ENCODE measurements at regions of chr1 and their contacts with region 1.

Region 1: DNA sequence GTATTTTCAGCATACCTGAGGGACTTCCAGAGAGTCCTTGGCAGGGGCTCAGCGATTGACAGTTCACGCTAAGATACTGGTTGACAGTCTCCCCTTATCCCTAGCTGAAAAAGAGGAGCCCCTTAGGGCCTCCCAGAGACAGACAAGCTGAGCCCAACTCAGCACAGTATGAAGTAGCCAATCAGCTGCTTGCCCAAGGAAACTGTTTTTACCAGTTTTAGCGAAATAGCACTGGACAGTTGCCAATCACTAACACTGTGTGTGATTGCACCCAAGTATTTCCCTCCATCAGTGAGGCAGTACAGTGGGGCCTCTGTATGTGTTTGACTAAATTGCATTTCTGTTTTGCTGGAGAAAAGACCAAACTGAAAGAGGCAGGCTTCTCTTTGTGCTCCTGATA is 27.0 kb downstream of the KHDRBS1 start:
- DNase-seq: no peak
- ATAC-seq: no peak
- H3K4me3 ChIP-seq: no peak overlapping the region
- H3K4me3 Mint-ChIP-seq: no peak overlapping the region
- H3K27ac ChIP-seq: no peak overlapping the region
- H3K27ac Mint-ChIP-seq: peak overlapping the region in 1 of 9 donors; percentile 82
- H3K4me1 ChIP-seq: no peaks in the 10 kb centered on the region
- H3K4me1 Mint-ChIP-seq: peaks cover 0 to 11% (median 7%) of the 10 kb centered on the region in 7 donors
- H3K27me3 ChIP-seq: no peaks in the 10 kb centered on the region
- H3K27me3 Mint-ChIP-seq: no peaks in the 10 kb centered on the region

Region 2: DNA sequence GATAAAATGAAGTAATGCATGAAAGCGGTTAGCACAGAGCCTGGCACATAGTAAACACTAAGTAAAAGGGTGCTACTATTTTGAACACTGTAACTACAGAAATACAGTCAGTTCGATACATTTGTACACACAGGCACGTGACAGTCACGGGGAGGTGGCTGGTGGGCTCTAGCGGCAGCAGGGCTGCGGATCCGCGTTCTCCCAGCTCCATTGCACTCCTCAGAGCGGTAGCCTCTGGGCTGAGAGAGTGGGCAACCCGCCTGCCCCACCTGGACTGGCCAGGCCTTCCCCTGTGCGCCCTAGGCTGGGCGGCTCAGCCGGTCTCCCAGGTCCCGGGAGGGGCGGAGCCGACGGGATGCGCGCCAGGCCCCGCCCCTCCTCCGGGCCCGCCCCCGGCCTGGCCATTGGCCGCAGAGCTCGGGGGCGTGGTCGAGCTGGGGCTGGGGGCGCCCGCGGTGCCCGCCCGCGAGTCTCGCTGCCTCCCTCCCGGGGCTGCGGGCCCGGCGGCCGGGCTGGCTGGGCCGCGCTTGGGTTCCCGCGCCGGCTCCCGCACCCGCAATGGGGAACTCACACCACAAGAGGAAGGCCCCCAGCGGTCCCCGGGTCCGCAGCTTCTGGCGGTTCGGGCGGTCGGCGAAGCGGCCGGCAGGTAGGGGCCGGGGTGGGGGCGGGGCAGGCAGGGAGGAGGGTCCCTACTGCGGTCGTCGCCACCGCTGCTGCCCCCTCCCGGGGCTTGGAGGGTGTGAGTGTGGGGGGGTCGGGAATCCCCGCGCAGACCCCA is 713.0 kb after region 1 on chr1:
- CTCF ChIA-PET with region 1: no interaction called
- POLR2A ChIA-PET with region 1: no interaction called
- intact Hi-C with region 1: loop called in 1 of 2 experiments (anchors 10 kb)
- DNase-seq: peak; percentile 51 to 81 (median 66)
- ATAC-seq: peak; percentile 90
- H3K4me3 ChIP-seq: peak overlapping the region; percentile 65
- H3K4me3 Mint-ChIP-seq: peak overlapping the region; percentile 75 to 91 (median 82)
- H3K27ac ChIP-seq: peak overlapping the region; percentile 39
- H3K27ac Mint-ChIP-seq: peak overlapping the region in 7 of 9 donors; percentile 70 to 91 (median 83)
- H3K4me1 ChIP-seq: peaks cover under 1 to 4% of the 10 kb centered on the region in 2 donors
- H3K4me1 Mint-ChIP-seq: peaks cover 0 to 29% (median 17%) of the 10 kb centered on the region in 7 donors
- H3K27me3 ChIP-seq: no peaks in the 10 kb centered on the region
- H3K27me3 Mint-ChIP-seq: peaks cover 0 to 53% (median 4%) of the 10 kb centered on the region in 5 donors

Measured in naive thymus-derived CD4-positive, alpha-beta T cell (primary cell).